ENCODE measurements at regions of chr2 and their contacts with region 1.

Region 1: GRCh38 chr2:131105156-131105949 is at the start of gene PLEKHB2:
- DNase-seq: peak; percentile 88 to 94
- H3K4me3 ChIP-seq: peak within 1 kb of the TSS; percentile 72 to 76
- H3K27ac ChIP-seq: peak within 1 kb of the TSS; percentile 79 to 86
- H3K4me1 ChIP-seq: peaks cover 0 to 7% of the 10 kb centered on the region in 2 donors
- H3K27me3 ChIP-seq: no peaks in the 10 kb centered on the region
- CTCF ChIP-seq: peak in 2 of 4 experiments; percentile 12 to 28
- POLR2A ChIP-seq: peak; percentile 72 to 88
- total RNA-seq, gene PLEKHB2: 11.8 to 58.9 (median 17.9) TPM

Region 2: DNA sequence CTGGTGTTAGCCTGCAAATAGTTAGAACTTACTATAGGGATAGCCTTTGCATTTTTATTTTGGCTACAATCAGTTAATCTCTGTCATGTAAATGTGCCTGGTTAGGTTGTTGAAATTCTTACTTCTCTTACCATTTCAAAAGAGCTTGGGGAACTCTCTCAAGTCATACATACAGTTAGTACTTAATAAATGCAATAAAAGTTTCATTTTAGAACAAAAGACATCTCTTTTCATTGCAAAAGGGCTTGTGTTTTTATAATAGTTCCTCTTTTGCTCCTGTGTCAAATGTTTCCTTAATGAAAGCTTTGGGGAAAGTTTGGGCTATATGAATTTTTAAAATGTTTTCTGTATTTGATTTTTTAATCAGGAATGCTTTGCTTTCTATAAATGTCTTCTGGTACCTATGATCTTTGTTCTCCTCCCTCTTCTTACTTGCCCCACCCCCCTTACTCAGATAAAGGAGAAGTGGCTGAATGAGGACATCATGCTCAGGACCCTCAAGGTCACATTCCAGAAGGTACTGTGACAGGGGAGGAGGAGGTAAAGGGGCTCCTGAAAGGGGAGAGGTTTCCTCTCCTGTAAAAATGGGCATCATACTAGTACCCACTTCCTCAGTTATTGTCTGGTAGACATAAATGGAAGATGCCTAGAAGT is 735.9 kb before region 1 on chr2:
- intact Hi-C with region 1: loop called (anchors 10 kb)
- DNase-seq: no peak
- H3K4me3 ChIP-seq: no peak overlapping the region
- H3K27ac ChIP-seq: no peak overlapping the region
- H3K4me1 ChIP-seq: peaks cover 5 to 19% of the 10 kb centered on the region in 2 donors
- H3K27me3 ChIP-seq: no peaks in the 10 kb centered on the region
- CTCF ChIP-seq: no peak
- POLR2A ChIP-seq: no peak